ENCODE measurements at regions of chr7 and their contacts with region 1.

Region 1: DNA sequence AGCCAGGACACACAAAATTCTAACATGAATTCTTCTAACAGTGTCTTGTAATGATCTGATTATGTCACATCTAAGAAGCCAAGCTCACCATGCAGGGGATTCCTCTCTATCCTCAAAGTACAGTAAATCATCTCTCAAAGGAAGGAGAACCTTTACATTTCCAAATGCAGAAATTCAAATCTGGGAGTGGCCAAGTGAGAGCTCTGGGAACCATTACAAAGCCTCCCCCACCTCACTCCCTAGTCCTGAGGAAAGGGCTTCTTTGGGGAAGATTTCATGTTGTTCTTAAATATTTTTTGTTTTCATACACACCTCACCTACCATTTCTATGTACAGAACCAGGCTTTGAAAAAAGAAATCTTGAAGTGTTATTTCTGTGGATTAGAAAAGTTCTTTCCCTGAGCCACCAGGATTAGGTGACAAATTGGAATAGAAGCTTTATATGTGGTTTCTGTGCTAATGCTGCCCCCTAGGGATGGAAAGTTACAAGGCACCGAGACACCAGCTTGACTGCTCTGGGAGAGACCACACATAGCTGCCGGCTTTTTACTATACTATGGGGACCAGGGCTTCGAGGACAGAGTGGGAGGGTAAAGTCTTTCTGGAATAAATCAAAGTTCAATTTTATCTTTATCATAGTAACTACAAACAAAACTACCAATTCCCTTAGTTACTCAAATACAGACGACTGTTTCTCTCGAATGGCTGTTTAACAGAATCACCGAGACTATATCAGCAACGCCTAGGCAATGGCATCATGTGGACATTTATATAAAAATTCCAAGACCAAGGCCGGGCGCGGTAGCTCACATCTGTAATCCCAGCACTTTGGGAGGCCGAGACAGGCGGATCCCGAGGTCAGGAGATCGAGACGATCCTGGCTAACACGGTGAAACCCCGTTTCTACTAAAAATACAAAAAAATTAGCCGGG is 116.1 kb downstream of the RNF216 start:
- DNase-seq: peak; percentile 80
- H3K4me3 ChIP-seq: no peak overlapping the region; a peak in 1 of 4 replicates
- H3K27ac ChIP-seq: 0 out of 4 replicates have a peak overlapping the region, but pooled peaks have one; percentile 9 to 11
- H3K4me1 ChIP-seq: peaks cover 6 to 35% of the 10 kb centered on the region in 2 experiments; a peak in 2 of 4 replicates
- H3K27me3 ChIP-seq: no peaks in the 10 kb centered on the region
- CTCF ChIP-seq: peak; percentile 99
- EP300 ChIP-seq: no peak
- RAD21 ChIP-seq: peak; percentile 100

Region 2: GRCh38 chr7:5470167-5470532 is 195.2 kb before region 1 on chr7:
- CTCF ChIA-PET with region 1: no interaction called
- POLR2A ChIA-PET with region 1: no interaction called
- DNase-seq: peak; percentile 70
- H3K4me3 ChIP-seq: no peak overlapping the region
- H3K27ac ChIP-seq: no peak overlapping the region
- H3K4me1 ChIP-seq: no peaks in the 10 kb centered on the region; a peak in 1 of 4 replicates
- H3K27me3 ChIP-seq: no peaks in the 10 kb centered on the region
- CTCF ChIP-seq: no peak
- EP300 ChIP-seq: no peak
- RAD21 ChIP-seq: peak; percentile 10; the same call in 1 of the 2 replicates

Region 3: DNA sequence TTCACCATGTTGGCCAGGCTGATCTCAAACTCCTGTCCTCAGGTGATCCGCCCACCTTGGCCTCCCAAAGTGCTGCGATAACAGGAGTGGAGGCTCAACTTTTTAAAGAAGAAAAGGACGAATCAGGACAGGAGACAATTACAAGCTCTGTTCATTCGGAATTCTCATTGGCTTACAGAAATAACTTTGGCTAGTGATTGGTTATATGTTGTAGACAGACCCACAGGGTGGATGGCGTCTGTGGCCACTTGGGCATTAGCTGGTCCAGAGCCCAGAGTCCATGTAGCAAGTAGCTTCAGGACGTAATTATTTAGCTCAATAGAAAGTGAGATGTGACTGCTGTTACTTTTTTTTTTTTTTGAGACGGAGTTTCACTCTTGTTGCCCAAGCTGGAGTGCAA is 81.3 kb before region 1 on chr7:
- CTCF ChIA-PET with region 1: no interaction called
- POLR2A ChIA-PET with region 1: no interaction called
- DNase-seq: peak; percentile 57
- H3K4me3 ChIP-seq: no peak overlapping the region
- H3K27ac ChIP-seq: no peak overlapping the region
- H3K4me1 ChIP-seq: peaks cover 0 to 4% of the 10 kb centered on the region in 2 experiments; a peak in 1 of 4 replicates
- H3K27me3 ChIP-seq: no peaks in the 10 kb centered on the region
- CTCF ChIP-seq: no peak
- EP300 ChIP-seq: no peak
- RAD21 ChIP-seq: no peak

Region 4: DNA sequence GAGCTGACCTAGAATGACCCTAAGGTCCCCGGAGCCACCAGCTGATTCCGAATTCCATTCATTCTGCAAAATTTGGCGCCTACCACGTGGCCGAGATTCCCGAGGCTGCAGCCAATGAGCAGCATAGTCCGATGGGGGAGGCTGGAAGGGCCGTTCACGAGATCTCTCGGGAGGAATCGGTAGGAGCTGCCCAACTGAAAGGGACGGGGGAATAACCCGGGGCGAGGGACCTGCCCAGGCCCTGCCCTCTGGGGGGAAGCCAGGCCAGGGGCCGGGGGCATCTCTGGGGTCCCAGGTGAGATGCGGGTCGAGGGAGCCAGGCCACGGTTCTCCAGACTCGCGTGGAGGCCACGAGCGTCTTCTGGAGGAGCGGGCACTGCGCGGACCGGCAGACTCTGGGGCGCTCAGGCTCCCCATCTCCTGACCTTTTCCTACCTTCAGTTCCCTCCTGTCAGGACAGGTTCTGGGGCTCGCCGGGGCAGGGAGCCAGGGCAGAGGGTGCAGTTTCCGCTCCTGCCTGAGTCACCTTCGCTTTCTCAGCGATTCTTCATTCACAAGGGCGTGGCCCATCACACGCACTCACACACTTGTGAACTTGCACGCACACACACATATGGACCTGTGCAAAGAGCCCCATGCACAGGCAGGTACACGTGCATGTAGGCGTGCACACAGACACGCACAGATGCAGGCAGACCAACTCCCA is 57.3 kb before region 1 on chr7:
- CTCF ChIA-PET with region 1: interaction called, 33 read pairs
- POLR2A ChIA-PET with region 1: interaction called, 3 read pairs
- DNase-seq: peak; percentile 53
- H3K4me3 ChIP-seq: no peak overlapping the region
- H3K27ac ChIP-seq: peak overlapping the region in 1 of 2 experiments; percentile 22; a peak in 1 of 4 replicates
- H3K4me1 ChIP-seq: no peaks in the 10 kb centered on the region; a peak in 1 of 4 replicates
- H3K27me3 ChIP-seq: no peaks in the 10 kb centered on the region
- CTCF ChIP-seq: no peak
- EP300 ChIP-seq: no peak
- RAD21 ChIP-seq: no peak

Region 5: DNA sequence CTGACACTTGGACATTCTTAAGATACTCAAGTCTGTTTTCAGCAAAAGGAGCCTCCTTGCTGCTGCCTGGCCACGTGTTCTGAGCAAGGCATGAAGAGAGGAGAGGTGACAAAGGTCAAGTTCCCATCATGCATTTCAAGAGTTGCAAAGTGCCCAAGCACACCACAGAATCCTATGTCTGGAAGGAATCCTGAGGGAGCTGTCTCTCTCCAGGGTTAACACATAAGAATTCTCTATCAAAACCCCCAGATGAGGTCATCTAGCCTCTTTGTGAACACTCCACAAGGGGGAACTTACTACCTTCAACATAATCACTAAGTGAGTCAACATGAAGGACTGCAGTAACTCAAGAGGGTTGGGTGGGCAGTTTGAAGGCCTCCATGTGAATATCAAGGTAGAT is 39.4 kb before region 1 on chr7:
- CTCF ChIA-PET with region 1: interaction called, 122 read pairs
- POLR2A ChIA-PET with region 1: no interaction called
- DNase-seq: peak; percentile 36
- H3K4me3 ChIP-seq: no peak overlapping the region
- H3K27ac ChIP-seq: peak overlapping the region in 1 of 2 experiments; percentile 64; a peak in 2 of 4 replicates
- H3K4me1 ChIP-seq: peaks cover 16 to 26% of the 10 kb centered on the region in 2 experiments
- H3K27me3 ChIP-seq: no peaks in the 10 kb centered on the region
- CTCF ChIP-seq: peak; percentile 58
- EP300 ChIP-seq: no peak
- RAD21 ChIP-seq: no peak; the same call in 1 of the 2 replicates

Region 6: DNA sequence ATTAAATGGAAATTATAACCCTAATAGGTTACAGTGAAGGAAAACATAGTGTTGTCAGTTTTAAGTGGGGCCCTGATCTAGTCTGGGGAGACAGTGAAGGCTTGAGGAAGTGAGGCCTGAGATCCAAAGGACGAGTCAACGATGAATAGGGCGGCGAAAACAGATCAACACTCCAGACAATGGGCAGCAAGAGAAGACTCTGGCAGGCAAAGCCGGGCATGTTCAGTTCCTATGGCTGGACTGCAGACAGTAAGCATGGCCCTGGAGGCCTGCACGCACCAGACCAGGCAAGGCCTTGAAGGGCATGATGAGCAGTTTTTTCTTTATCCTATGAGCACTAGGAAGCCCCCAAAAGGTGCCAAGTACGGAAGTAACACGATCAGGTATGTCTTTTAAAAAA is 11.7 kb before region 1 on chr7:
- CTCF ChIA-PET with region 1: interaction called, 54 read pairs
- POLR2A ChIA-PET with region 1: interaction called, 7 read pairs
- DNase-seq: no peak
- H3K4me3 ChIP-seq: no peak overlapping the region
- H3K27ac ChIP-seq: peak overlapping the region in 1 of 2 experiments; percentile 54; a peak in 1 of 4 replicates
- H3K4me1 ChIP-seq: peaks cover 0 to 21% of the 10 kb centered on the region in 2 experiments; a peak in 1 of 4 replicates
- H3K27me3 ChIP-seq: no peaks in the 10 kb centered on the region
- CTCF ChIP-seq: no peak
- EP300 ChIP-seq: no peak
- RAD21 ChIP-seq: no peak

Region 7: GRCh38 chr7:5694912-5695726 is 29.8 kb after region 1 on chr7:
- CTCF ChIA-PET with region 1: interaction called, 63 read pairs
- POLR2A ChIA-PET with region 1: no interaction called
- DNase-seq: no peak
- H3K4me3 ChIP-seq: peak overlapping the region in 1 of 2 experiments; percentile 16; a peak in 1 of 4 replicates
- H3K27ac ChIP-seq: peak overlapping the region; percentile 95 to 99
- H3K4me1 ChIP-seq: peaks cover 49 to 80% of the 10 kb centered on the region in 2 experiments
- H3K27me3 ChIP-seq: no peaks in the 10 kb centered on the region
- CTCF ChIP-seq: no peak
- EP300 ChIP-seq: peak in 1 of 2 experiments; percentile 88; a peak in 2 of 4 replicates
- RAD21 ChIP-seq: no peak

Measured in SK-N-SH (cell line).